CD4-positive, alpha-beta memory T cell (primary cell): ENCODE measurements at regions of chr1 and their contacts with region 1.

Region 1: GRCh38 chr1:151024540-151025146 is 11.7 kb upstream of the BNIPL start:
- DNase-seq: peak; percentile 81 to 86 (median 85)
- H3K4me3 ChIP-seq: no peak overlapping the region
- H3K4me3 Mint-ChIP-seq: peak overlapping the region in 5 of 8 donors; percentile 22 to 65 (median 54)
- H3K27ac ChIP-seq: no peak overlapping the region
- H3K27ac Mint-ChIP-seq: peak overlapping the region; percentile 41 to 86 (median 73)
- H3K4me1 ChIP-seq: peaks cover 7% of the 10 kb centered on the region
- H3K4me1 Mint-ChIP-seq: peaks cover 5 to 11% (median 6%) of the 10 kb centered on the region in 4 donors
- H3K27me3 ChIP-seq: no peaks in the 10 kb centered on the region
- H3K27me3 Mint-ChIP-seq: no peaks in the 10 kb centered on the region

Region 2: GRCh38 chr1:150259758-150260669 is 764.6 kb before region 1 on chr1:
- CTCF ChIA-PET with region 1: no interaction called
- POLR2A ChIA-PET with region 1: no interaction called
- intact Hi-C with region 1: no loop called
- DNase-seq: no peak
- H3K4me3 ChIP-seq: no peak overlapping the region
- H3K4me3 Mint-ChIP-seq: no peak overlapping the region
- H3K27ac ChIP-seq: no peak overlapping the region
- H3K27ac Mint-ChIP-seq: peak overlapping the region in 1 of 7 donors; percentile 36
- H3K4me1 ChIP-seq: peaks cover 15% of the 10 kb centered on the region
- H3K4me1 Mint-ChIP-seq: peaks cover 8 to 25% (median 13%) of the 10 kb centered on the region in 4 donors
- H3K27me3 ChIP-seq: peaks cover 27% of the 10 kb centered on the region
- H3K27me3 Mint-ChIP-seq: peaks cover 19 to 24% of the 10 kb centered on the region in 2 donors

Region 3: GRCh38 chr1:151047925-151048645 is 23.4 kb after region 1 on chr1:
- CTCF ChIA-PET with region 1: interaction called, 44 read pairs
- POLR2A ChIA-PET with region 1: interaction called, 218 read pairs
- intact Hi-C with region 1: loop called (anchors 1 kb)
- DNase-seq: peak; percentile 59 to 72 (median 64)
- H3K4me3 ChIP-seq: peak overlapping the region; percentile 59 to 74
- H3K4me3 Mint-ChIP-seq: peak overlapping the region; percentile 86 to 95 (median 90)
- H3K27ac ChIP-seq: peak overlapping the region; percentile 74
- H3K27ac Mint-ChIP-seq: peak overlapping the region; percentile 88 to 98 (median 93)
- H3K4me1 ChIP-seq: peaks cover 38% of the 10 kb centered on the region
- H3K4me1 Mint-ChIP-seq: peaks cover 35 to 81% (median 61%) of the 10 kb centered on the region in 4 donors
- H3K27me3 ChIP-seq: no peaks in the 10 kb centered on the region
- H3K27me3 Mint-ChIP-seq: no peaks in the 10 kb centered on the region

Region 4: GRCh38 chr1:151053928-151054327 is 29.3 kb after region 1 on chr1:
- CTCF ChIA-PET with region 1: interaction called, 67 read pairs
- POLR2A ChIA-PET with region 1: interaction called, 218 read pairs
- intact Hi-C with region 1: no loop called
- DNase-seq: no peak
- H3K4me3 ChIP-seq: no peak overlapping the region
- H3K4me3 Mint-ChIP-seq: peak overlapping the region in 5 of 8 donors; percentile 26 to 100 (median 100)
- H3K27ac ChIP-seq: peak overlapping the region; percentile 90
- H3K27ac Mint-ChIP-seq: peak overlapping the region; percentile 76 to 99 (median 98)
- H3K4me1 ChIP-seq: peaks cover 63% of the 10 kb centered on the region
- H3K4me1 Mint-ChIP-seq: peaks cover 33 to 93% (median 59%) of the 10 kb centered on the region in 4 donors
- H3K27me3 ChIP-seq: no peaks in the 10 kb centered on the region
- H3K27me3 Mint-ChIP-seq: peaks cover 0 to 1% of the 10 kb centered on the region in 2 donors

Region 5: DNA sequence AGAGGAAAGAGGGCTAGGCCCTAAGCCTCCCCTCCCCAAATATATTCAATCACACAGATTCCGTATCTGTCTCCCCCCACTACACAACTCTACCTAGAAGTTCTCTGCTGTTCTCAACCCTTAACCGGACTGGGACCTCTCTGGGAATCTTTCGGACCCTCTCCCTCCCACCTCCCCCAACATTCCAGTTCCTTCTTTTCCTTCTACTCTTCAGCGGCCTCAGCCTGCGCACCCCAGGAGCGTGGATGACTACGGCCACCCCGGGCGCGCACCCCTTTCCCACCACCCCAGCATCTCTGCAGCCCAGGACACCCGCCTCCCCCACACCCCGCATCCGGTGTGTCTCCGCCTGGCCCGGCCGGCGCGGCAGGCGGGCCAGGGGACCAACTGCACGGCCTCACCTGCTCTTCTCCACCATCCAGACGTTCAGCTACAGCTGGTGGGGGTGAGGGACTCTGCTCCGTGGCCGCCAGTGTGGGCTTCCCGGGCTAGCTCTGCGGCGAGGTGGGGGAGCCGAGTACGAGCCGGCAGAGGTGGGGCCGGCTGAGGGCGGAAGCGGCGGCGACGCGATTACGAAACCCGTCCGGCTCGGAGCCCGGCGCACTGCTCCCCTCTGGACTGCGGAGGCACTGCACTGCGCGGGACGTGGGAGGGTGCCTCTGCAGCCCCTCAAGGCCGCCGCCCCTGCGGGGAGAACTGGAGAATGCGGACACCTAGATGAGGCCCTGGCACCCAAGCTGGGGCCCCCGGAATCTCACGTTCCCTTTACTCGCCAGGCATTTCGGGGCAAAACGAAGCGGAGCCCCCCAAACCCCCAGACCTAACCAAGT is 34.6 kb after region 1 on chr1 and contains the start of gene CDC42SE1:
- CTCF ChIA-PET with region 1: interaction called, 67 read pairs
- POLR2A ChIA-PET with region 1: interaction called, 218 read pairs
- intact Hi-C with region 1: loop called (anchors 1 kb)
- DNase-seq: peak; percentile 81 to 85 (median 85)
- H3K4me3 ChIP-seq: peak within 1 kb of the TSS; percentile 89 to 93
- H3K4me3 Mint-ChIP-seq: peak within 1 kb of the TSS; percentile 96 to 100 (median 100)
- H3K27ac ChIP-seq: peak within 1 kb of the TSS; percentile 90
- H3K27ac Mint-ChIP-seq: peak within 1 kb of the TSS; percentile 98 to 100 (median 99)
- H3K4me1 ChIP-seq: peaks cover 45% of the 10 kb centered on the region
- H3K4me1 Mint-ChIP-seq: peaks cover 31 to 70% (median 38%) of the 10 kb centered on the region in 4 donors
- H3K27me3 ChIP-seq: no peaks in the 10 kb centered on the region
- H3K27me3 Mint-ChIP-seq: peaks cover 0 to 1% of the 10 kb centered on the region in 2 donors
- total RNA-seq, gene CDC42SE1: 478 to 483 TPM

Region 6: GRCh38 chr1:151070474-151071276 is 46.0 kb after region 1 on chr1 and contains the start of gene GABPB2:
- CTCF ChIA-PET with region 1: interaction called, 40 read pairs
- POLR2A ChIA-PET with region 1: interaction called, 22 read pairs
- intact Hi-C with region 1: loop called (anchors 1 kb)
- DNase-seq: peak; percentile 87 to 96 (median 88)
- H3K4me3 ChIP-seq: peak within 1 kb of the TSS; percentile 57 to 96
- H3K4me3 Mint-ChIP-seq: peak within 1 kb of the TSS; percentile 95 to 100 (median 99)
- H3K27ac ChIP-seq: peak within 1 kb of the TSS; percentile 97
- H3K27ac Mint-ChIP-seq: peak within 1 kb of the TSS; percentile 97 to 100 (median 100)
- H3K4me1 ChIP-seq: peaks cover 17% of the 10 kb centered on the region
- H3K4me1 Mint-ChIP-seq: peaks cover 13 to 34% (median 23%) of the 10 kb centered on the region in 4 donors
- H3K27me3 ChIP-seq: no peaks in the 10 kb centered on the region
- H3K27me3 Mint-ChIP-seq: no peaks in the 10 kb centered on the region
- total RNA-seq, gene GABPB2: 36.8 to 42.8 TPM

Region 7: GRCh38 chr1:151146412-151147140 is 121.9 kb after region 1 on chr1 and contains the start of gene SEMA6C:
- CTCF ChIA-PET with region 1: interaction called, 10 read pairs
- POLR2A ChIA-PET with region 1: no interaction called
- intact Hi-C with region 1: no loop called
- DNase-seq: peak; percentile 80 to 88 (median 81)
- H3K4me3 ChIP-seq: peak within 1 kb of the TSS; percentile 83
- H3K4me3 Mint-ChIP-seq: peak within 1 kb of the TSS; percentile 92 to 98 (median 97)
- H3K27ac ChIP-seq: peak within 1 kb of the TSS; percentile 56
- H3K27ac Mint-ChIP-seq: peak within 1 kb of the TSS; percentile 37 to 96 (median 94)
- H3K4me1 ChIP-seq: peaks cover 24% of the 10 kb centered on the region
- H3K4me1 Mint-ChIP-seq: peaks cover 9 to 33% (median 17%) of the 10 kb centered on the region in 4 donors
- H3K27me3 ChIP-seq: no peaks in the 10 kb centered on the region
- H3K27me3 Mint-ChIP-seq: peaks cover 0 to 2% of the 10 kb centered on the region in 2 donors
- total RNA-seq, gene SEMA6C: 7.6 to 8.2 TPM

Region 8: DNA sequence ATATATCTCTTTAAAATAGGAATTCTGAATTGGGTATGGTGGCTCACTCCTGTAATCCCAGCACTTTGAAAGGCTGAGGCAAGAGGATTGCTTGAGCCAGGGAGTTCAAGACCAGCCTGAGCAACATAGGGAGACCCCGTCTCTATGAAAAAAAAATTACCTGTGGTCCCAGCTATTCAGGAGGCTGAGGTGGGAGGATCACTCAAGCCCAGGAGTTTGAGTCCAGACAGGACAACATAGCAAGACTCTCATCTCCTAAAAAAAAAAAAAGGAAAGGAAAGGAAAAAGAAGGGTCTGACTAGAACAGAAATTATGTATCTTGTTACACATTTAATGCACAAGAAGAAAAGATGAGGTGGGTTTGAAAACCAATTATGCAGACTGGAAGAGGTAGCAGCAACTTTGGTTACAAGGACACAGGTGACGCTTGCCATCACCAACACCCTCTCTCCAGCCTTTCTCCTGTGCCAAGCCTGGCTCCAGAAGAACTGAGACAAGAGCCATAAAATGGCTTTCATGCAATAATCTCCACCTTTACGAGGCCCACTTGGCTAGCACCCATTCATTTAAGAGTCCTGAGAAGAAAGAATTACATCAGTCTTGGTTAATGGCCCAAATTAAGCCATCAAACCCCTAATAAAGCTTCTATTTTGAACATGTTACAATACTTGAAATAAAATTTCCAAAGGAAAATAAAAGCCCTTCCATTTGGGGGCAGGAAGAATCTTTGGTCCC is 352.7 kb after region 1 on chr1:
- CTCF ChIA-PET with region 1: no interaction called
- POLR2A ChIA-PET with region 1: no interaction called
- intact Hi-C with region 1: no loop called
- DNase-seq: no peak
- H3K4me3 ChIP-seq: no peak overlapping the region
- H3K4me3 Mint-ChIP-seq: no peak overlapping the region
- H3K27ac ChIP-seq: no peak overlapping the region
- H3K27ac Mint-ChIP-seq: no peak overlapping the region
- H3K4me1 ChIP-seq: no peaks in the 10 kb centered on the region
- H3K4me1 Mint-ChIP-seq: no peaks in the 10 kb centered on the region
- H3K27me3 ChIP-seq: no peaks in the 10 kb centered on the region
- H3K27me3 Mint-ChIP-seq: peaks cover 3 to 8% of the 10 kb centered on the region in 2 donors